ENCODE measurements at regions of chr2 and their contacts with region 1.

Region 1: GRCh38 chr2:30208452-30208851 is 22.9 kb upstream of the LBH start:
- DNase-seq: peak; percentile 57
- ATAC-seq: peak; percentile 77
- H3K4me3 Mint-ChIP-seq: no peak overlapping the region
- H3K27ac Mint-ChIP-seq: peak overlapping the region; percentile 33
- H3K4me1 Mint-ChIP-seq: peaks cover 17% of the 10 kb centered on the region
- H3K27me3 Mint-ChIP-seq: no peaks in the 10 kb centered on the region
- CTCF ChIP-seq: peak; percentile 98

Region 2: GRCh38 chr2:29990129-29990528 is 218.3 kb before region 1 on chr2:
- CTCF ChIA-PET with region 1: no interaction called
- POLR2A ChIA-PET with region 1: no interaction called
- intact Hi-C with region 1: no loop called
- DNase-seq: no peak
- ATAC-seq: no peak
- H3K4me3 Mint-ChIP-seq: no peak overlapping the region
- H3K27ac Mint-ChIP-seq: no peak overlapping the region
- H3K4me1 Mint-ChIP-seq: no peaks in the 10 kb centered on the region
- H3K27me3 Mint-ChIP-seq: peaks cover 4% of the 10 kb centered on the region
- CTCF ChIP-seq: no peak

Region 3: GRCh38 chr2:30146438-30147147 is 61.9 kb before region 1 on chr2 and contains the start of gene YPEL5:
- CTCF ChIA-PET with region 1: interaction called, 19 read pairs
- POLR2A ChIA-PET with region 1: no interaction called
- intact Hi-C with region 1: no loop called
- DNase-seq: peak; percentile 99
- ATAC-seq: peak; percentile 92
- H3K4me3 Mint-ChIP-seq: peak within 1 kb of the TSS; percentile 85
- H3K27ac Mint-ChIP-seq: peak within 1 kb of the TSS; percentile 98
- H3K4me1 Mint-ChIP-seq: peaks cover 51% of the 10 kb centered on the region
- H3K27me3 Mint-ChIP-seq: no peaks in the 10 kb centered on the region
- CTCF ChIP-seq: no peak
- total RNA-seq, gene YPEL5: 28.0 to 28.4 TPM

Region 4: DNA sequence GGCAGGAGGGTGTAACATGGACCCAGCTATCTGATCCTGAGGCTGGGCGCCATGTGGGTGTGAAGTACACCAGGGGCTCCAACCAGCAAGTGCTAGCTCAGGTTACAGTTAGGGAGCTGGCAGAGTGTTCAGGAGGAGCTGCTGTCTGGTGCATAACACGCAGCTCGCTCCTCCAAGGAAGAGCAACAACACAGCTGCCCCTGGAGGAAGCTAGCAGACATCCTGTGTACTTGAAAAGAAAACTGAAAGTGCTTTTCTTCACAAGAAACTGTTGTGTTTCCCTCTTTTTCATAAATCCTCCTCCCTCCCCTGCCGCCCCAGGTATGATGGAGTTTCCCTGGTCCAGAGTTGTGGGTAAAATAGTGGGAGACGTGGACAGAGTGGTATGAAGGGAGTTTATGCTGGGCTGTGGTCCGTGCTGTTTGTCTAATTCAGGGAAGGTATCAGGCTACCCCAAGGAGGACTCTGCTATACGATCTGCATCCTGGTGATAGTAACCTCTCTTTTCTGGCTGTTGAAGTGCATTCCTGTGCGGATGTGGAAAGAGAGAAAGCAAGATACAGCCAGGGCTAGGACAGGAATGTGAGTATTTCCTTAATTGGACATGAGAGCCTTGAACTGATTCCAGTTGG is 16.8 kb after region 1 on chr2:
- CTCF ChIA-PET with region 1: interaction called, 156 read pairs
- POLR2A ChIA-PET with region 1: interaction called, 8 read pairs
- intact Hi-C with region 1: no loop called
- DNase-seq: peak; percentile 53
- ATAC-seq: peak; percentile 45
- H3K4me3 Mint-ChIP-seq: peak overlapping the region; percentile 87
- H3K27ac Mint-ChIP-seq: peak overlapping the region; percentile 99
- H3K4me1 Mint-ChIP-seq: peaks cover 74% of the 10 kb centered on the region
- H3K27me3 Mint-ChIP-seq: no peaks in the 10 kb centered on the region
- CTCF ChIP-seq: no peak

Region 5: GRCh38 chr2:30252723-30253701 is 44.6 kb after region 1 on chr2:
- CTCF ChIA-PET with region 1: interaction called, 14 read pairs
- POLR2A ChIA-PET with region 1: interaction called, 3 read pairs
- intact Hi-C with region 1: no loop called
- DNase-seq: peak; percentile 88
- ATAC-seq: peak; percentile 67
- H3K4me3 Mint-ChIP-seq: peak overlapping the region; percentile 53
- H3K27ac Mint-ChIP-seq: peak overlapping the region; percentile 95
- H3K4me1 Mint-ChIP-seq: peaks cover 96% of the 10 kb centered on the region
- H3K27me3 Mint-ChIP-seq: peaks cover 2% of the 10 kb centered on the region
- CTCF ChIP-seq: no peak

Region 6: DNA sequence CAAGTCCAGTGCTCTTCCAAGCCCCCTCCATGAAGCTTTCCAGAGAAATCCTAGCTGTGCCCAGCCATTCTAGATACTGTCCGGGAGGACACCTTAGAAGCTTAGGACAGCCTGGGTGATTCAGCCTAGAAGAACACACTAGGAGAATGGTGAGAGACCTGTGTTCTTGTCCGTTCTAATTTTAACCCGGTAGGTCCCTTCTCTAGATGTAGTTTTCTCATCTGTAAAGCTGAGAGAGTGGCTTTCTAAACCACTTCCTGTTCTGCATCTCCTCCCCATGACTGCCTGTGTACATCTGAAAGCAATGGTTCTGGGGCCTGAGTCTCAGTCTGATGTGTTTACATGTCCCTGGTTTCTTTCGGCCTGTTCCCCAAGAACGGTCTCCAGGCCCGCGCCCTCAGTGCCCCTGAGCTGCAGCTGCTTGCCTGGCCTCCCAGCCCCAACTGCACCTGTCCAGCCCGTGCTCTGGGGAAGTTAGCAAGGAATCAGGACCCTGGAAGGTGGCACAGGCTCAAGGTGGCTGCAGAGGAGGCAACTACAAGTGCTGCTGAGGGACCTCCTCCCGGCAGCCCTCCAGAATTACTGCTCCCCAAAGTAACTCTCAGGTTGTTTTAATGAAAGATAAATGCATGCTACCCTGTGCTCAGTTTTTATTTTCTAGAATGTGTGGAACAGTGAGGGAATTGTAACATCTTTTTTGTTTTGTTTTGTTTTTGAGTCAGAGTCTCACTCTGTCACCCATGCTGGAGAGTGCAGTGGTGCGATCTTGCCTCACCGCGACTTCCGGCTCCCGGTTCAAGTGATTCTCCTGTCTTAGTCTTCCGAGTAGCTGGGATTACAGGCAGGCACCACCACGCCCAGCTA is 128.8 kb after region 1 on chr2:
- CTCF ChIA-PET with region 1: interaction called, 19 read pairs
- POLR2A ChIA-PET with region 1: no interaction called
- intact Hi-C with region 1: no loop called
- DNase-seq: peak; percentile 67
- ATAC-seq: peak; percentile 76
- H3K4me3 Mint-ChIP-seq: peak overlapping the region; percentile 59
- H3K27ac Mint-ChIP-seq: peak overlapping the region; percentile 96
- H3K4me1 Mint-ChIP-seq: peaks cover 78% of the 10 kb centered on the region
- H3K27me3 Mint-ChIP-seq: no peaks in the 10 kb centered on the region
- CTCF ChIP-seq: no peak

Region 7: DNA sequence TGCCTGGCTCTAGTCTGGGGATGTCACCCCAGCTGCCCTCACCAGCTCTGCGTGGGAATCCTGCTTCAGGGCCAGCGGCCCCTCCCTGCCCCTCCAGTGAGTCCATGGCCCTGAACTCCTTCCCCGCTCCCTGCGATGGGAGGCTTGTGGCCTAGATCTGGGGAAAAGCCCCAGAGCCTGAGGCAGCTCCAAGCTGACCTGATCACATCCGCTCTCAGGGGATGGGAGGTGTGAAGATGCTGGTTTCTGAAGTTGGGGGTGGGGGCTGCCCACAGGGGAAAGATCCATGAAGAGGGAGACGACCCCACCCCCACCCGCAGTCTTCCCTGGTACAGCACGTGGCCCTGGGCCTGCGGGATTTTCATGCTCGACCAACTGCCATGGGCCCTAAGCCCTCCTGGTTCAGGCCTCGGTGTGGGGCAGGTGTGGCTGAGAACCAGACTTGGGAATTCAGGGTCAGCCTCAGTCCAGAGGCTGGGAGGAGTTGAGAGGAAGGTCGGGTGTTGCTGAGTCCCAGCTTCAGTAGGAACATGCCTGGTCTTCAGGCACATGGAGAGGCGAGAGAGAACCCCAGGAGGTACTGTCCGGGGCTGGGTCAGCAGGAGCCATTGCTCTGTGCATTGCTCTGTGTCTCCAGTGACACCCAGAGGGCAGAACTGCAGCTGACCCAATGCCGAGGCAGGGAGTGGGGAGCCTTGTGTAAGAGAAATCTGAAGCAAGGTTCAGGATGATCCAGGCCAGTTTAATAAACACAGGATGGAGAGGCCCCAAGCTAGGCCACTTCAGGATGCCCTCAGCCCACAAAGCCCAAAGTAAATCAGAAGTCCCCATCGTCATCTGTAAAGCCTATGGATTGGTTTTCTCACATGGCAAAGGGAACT is 483.7 kb after region 1 on chr2:
- CTCF ChIA-PET with region 1: interaction called, 11 read pairs
- POLR2A ChIA-PET with region 1: no interaction called
- intact Hi-C with region 1: no loop called
- DNase-seq: no peak
- ATAC-seq: no peak
- H3K4me3 Mint-ChIP-seq: no peak overlapping the region
- H3K27ac Mint-ChIP-seq: no peak overlapping the region
- H3K4me1 Mint-ChIP-seq: no peaks in the 10 kb centered on the region
- H3K27me3 Mint-ChIP-seq: no peaks in the 10 kb centered on the region
- CTCF ChIP-seq: no peak